Activated CD4-positive, alpha-beta memory T cell treated with anti-CD3 and anti-CD28 coated beads for 36 hours (primary cell): ENCODE measurements at regions of chr11 and their contacts with region 1.

Region 1: DNA sequence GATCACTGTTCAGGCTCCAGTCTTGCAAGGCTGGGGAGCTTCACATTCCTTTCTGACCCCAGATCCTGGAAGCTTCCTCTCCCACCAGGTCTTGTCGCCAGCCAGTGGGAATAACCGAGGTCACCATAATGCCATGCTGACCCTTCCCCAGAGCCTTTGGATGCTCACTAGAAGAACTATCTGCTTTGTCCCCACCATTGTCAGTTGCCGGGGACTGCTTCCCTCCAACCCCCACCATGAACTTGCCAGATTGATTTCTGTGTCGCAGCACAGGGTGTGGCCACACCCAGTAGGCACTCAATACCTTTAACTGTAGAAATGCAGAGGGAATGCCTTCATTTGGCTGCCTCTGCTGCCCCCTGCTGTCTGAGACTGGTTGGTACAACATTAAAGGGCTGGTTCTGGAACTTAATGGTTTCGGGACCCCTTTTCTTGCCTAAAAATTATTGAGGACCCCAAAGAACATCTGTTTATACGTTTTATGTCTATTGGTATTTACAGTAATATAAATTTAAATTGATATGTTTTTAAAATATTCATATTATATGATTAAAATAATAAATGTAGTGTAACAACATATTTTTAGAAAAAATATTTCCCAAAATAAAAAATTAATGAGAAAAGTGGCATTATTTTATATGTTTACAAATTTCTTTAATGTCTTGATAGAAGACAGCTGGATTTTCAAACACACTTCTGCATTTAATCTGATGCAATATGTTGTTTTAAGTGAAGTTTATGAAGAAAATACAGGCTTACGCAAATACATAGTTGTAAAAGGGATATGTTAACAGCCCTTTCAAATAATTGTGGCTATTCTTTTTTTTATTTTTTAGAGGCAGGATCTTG is 6.7 kb upstream of the GDPD5 start:
- DNase-seq: peak; percentile 89
- H3K4me3 Mint-ChIP-seq: no peak overlapping the region
- H3K27ac Mint-ChIP-seq: peak overlapping the region; percentile 39
- H3K4me1 Mint-ChIP-seq: peaks cover 37% of the 10 kb centered on the region
- H3K27me3 Mint-ChIP-seq: no peaks in the 10 kb centered on the region

Region 2: GRCh38 chr11:75445315-75445953 is 87.0 kb before region 1 on chr11:
- CTCF ChIA-PET with region 1: interaction called, 171 read pairs
- POLR2A ChIA-PET with region 1: no interaction called
- intact Hi-C with region 1: loop called (anchors 1 kb)
- DNase-seq: peak; percentile 80
- H3K4me3 Mint-ChIP-seq: no peak overlapping the region
- H3K27ac Mint-ChIP-seq: no peak overlapping the region
- H3K4me1 Mint-ChIP-seq: no peaks in the 10 kb centered on the region
- H3K27me3 Mint-ChIP-seq: no peaks in the 10 kb centered on the region

Region 3: DNA sequence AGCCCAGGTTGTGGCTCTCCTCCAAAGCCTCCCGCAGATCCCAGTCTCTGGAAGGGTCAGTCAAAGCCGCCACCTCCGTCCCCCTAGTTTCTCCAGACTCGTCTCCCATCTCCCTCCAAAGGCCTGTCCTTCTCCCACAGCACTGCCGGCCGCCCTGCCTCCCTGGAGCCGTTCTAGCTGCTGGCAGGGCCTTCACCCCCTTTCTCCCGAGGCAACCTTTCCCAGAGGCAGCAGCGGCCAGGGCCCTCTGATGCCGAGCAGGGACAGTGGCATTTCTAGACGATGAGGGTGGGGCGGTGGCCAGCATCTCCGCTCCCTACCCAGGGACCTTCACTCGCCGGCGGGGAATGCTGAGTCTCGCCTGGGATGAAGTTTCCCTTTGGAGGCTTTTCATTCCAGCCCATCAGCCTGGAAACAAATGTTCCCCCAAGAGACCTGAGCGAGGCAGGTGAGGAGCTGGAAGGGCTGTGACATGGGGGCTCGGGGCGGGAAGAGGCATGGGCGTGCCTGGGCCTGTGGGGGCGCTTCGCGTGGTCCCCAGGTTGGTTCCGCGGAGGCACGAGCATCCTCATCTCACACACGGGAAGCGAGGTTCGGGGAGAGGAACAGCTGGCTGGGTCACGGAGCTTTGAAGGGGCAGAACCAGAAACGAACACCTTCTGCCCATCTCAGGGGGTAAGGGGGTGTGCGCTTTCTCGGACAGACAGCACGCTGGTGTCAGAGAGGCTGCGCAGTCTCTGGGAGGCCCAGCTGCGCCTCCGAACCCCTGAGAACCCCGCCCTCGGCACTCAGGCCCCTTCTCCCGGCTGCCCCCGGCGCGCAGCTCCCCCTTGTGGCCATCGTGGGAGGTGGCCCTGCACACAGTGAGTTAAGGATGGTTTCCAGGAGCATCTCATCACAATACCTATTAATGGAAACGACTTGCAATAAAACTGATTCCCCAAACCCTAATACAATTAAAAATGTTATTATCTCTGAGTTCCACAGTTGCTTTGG is 81.3 kb before region 1 on chr11:
- CTCF ChIA-PET with region 1: interaction called, 171 read pairs
- POLR2A ChIA-PET with region 1: no interaction called
- intact Hi-C with region 1: no loop called
- DNase-seq: peak; percentile 59
- H3K4me3 Mint-ChIP-seq: no peak overlapping the region
- H3K27ac Mint-ChIP-seq: no peak overlapping the region
- H3K4me1 Mint-ChIP-seq: no peaks in the 10 kb centered on the region
- H3K27me3 Mint-ChIP-seq: no peaks in the 10 kb centered on the region